Activated naive CD8-positive, alpha-beta T cell treated with anti-CD3 and anti-CD28 coated beads, Interleukin-2, amount 10 ng/mL, durations not matched to agents 7 days and 5 days (primary cell): ENCODE measurements at regions of chr3 and their contacts with region 1.

Region 1: GRCh38 chr3:195909644-195910508 is 1.5 kb upstream of the TNK2 start:
- DNase-seq: peak; percentile 91
- ATAC-seq: peak; percentile 60
- H3K4me3 Mint-ChIP-seq: peak overlapping the region; percentile 68
- H3K27ac Mint-ChIP-seq: peak overlapping the region; percentile 85
- H3K4me1 Mint-ChIP-seq: peaks cover 23% of the 10 kb centered on the region
- H3K27me3 Mint-ChIP-seq: no peaks in the 10 kb centered on the region

Region 2: DNA sequence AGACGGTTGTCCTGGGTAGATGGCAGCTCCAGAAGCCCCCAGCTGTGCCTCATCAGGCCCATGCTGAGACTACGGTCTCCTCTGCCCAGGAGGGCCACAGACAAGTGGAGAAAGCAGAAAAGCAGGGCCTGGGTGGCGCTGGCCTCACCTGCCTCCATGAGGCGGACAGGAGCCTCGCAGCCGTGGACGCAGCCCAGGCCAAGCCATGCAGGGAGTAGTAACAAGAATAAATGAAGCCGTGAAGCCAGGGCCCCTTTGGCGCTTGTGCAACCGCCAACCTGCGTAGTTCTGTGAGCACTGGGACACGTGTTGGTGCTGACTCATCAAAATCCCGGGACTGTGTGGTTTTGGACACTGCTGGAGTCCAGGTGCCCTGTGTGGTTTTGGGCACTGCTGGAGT is 85.9 kb before region 1 on chr3:
- POLR2A ChIA-PET with region 1: no interaction called
- DNase-seq: no peak
- ATAC-seq: no peak
- H3K4me3 Mint-ChIP-seq: no peak overlapping the region
- H3K27ac Mint-ChIP-seq: no peak overlapping the region
- H3K4me1 Mint-ChIP-seq: no peaks in the 10 kb centered on the region
- H3K27me3 Mint-ChIP-seq: peaks cover 10% of the 10 kb centered on the region

Region 3: DNA sequence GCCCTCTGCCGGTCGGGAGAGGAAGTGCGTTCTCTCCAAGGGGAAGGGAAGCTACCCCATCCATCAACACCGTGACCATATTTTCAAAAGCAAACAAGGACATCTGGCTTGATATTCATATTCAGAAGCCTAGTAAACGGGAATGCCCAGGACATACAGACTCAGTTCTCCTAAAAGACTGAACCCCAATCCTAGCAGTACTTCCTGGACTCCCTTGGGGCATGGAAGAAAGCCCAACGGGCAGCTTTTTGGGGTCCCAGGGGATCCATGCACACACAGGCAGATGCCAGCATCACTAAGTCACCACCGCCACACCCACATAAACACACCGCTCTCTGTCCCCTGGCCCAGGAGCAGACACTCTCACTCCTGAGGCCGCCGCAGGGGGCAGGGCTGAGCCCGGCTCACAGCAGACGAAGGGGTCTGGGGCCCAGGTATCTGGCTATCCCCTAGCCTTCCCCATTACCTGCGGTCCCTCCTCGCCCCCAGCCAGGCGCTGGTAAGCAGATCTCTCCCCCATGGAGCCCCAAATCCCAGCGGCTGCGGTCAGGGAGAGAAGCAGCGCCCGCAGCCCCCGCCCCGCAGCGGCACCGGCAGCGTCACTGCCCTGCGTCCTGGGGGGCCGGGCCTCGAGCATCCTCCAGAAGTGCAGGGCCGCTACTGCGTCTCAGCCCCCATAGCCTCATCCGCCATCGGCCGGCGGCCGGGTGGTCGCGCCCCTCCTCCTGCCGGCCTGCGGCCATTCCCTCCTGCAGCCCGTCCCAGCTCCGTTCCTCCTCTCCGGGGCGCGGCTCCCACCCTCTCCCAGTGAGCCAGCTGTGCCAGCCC is 14.9 kb before region 1 on chr3:
- POLR2A ChIA-PET with region 1: interaction called, 172 read pairs
- DNase-seq: peak; percentile 81
- ATAC-seq: peak; percentile 71
- H3K4me3 Mint-ChIP-seq: peak overlapping the region; percentile 81
- H3K27ac Mint-ChIP-seq: peak overlapping the region; percentile 78
- H3K4me1 Mint-ChIP-seq: peaks cover 37% of the 10 kb centered on the region
- H3K27me3 Mint-ChIP-seq: no peaks in the 10 kb centered on the region

Region 4: DNA sequence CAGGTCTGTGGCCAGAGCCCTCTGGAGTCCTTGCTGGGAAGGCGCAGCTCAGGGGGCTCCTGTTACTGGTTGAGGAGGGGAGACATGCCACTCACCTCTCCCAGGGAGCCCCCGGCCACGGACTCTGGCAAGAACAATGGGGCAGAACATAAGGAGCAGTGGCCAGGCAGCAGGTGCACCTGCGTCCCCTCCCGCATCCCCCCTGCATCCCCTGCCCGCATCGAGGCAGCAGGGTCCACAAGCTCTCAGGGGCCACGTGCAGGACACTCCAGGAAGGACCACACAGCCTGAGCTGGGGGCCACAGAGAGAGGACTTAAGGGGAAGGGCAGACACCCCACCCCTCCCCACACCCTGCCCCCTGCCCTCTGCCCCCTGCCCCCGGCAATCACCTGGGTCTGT is 99.1 kb after region 1 on chr3:
- POLR2A ChIA-PET with region 1: no interaction called
- DNase-seq: no peak
- ATAC-seq: no peak
- H3K4me3 Mint-ChIP-seq: no peak overlapping the region
- H3K27ac Mint-ChIP-seq: no peak overlapping the region
- H3K4me1 Mint-ChIP-seq: peaks cover 2% of the 10 kb centered on the region
- H3K27me3 Mint-ChIP-seq: peaks cover 22% of the 10 kb centered on the region